ENCODE measurements at regions of chr4 and their contacts with region 1.

Region 1: GRCh38 chr4:173505924-173506518 is 24.0 kb downstream of the HAND2 start:
- DNase-seq: peak in 1 of 2 donors; percentile 67
- H3K4me3 ChIP-seq: no peak overlapping the region
- H3K27ac ChIP-seq: peak overlapping the region in 1 of 2 donors; percentile 22
- H3K4me1 ChIP-seq: no peaks in the 10 kb centered on the region
- H3K27me3 ChIP-seq: peaks cover 0 to 5% of the 10 kb centered on the region in 2 donors
- CTCF ChIP-seq: peak; percentile 66 to 79 (median 71)
- POLR2A ChIP-seq: no peak

Region 2: GRCh38 chr4:172982151-172982590 is 523.9 kb before region 1 on chr4:
- intact Hi-C with region 1: no loop called
- DNase-seq: peak in 1 of 2 donors; percentile 46
- H3K4me3 ChIP-seq: no peak overlapping the region
- H3K27ac ChIP-seq: peak overlapping the region in 1 of 2 donors; percentile 54
- H3K4me1 ChIP-seq: no peaks in the 10 kb centered on the region
- H3K27me3 ChIP-seq: no peaks in the 10 kb centered on the region
- CTCF ChIP-seq: no peak
- POLR2A ChIP-seq: no peak

Region 3: GRCh38 chr4:173318648-173319211 is 187.3 kb before region 1 on chr4:
- intact Hi-C with region 1: loop called (anchors 10 kb)
- DNase-seq: no peak
- H3K4me3 ChIP-seq: no peak overlapping the region
- H3K27ac ChIP-seq: no peak overlapping the region
- H3K4me1 ChIP-seq: no peaks in the 10 kb centered on the region
- H3K27me3 ChIP-seq: no peaks in the 10 kb centered on the region
- CTCF ChIP-seq: peak in 3 of 4 experiments; percentile 17 to 51 (median 49)
- POLR2A ChIP-seq: no peak

Region 4: GRCh38 chr4:174119051-174119450 is 613.0 kb after region 1 on chr4:
- intact Hi-C with region 1: loop called (anchors 10 kb)
- DNase-seq: peak; percentile 20 to 39
- H3K4me3 ChIP-seq: no peak overlapping the region
- H3K27ac ChIP-seq: no peak overlapping the region
- H3K4me1 ChIP-seq: no peaks in the 10 kb centered on the region
- H3K27me3 ChIP-seq: no peaks in the 10 kb centered on the region
- CTCF ChIP-seq: no peak
- POLR2A ChIP-seq: no peak